AG04449 (cell line): ENCODE measurements at regions of chr17 and their contacts with region 1.

Region 1: DNA sequence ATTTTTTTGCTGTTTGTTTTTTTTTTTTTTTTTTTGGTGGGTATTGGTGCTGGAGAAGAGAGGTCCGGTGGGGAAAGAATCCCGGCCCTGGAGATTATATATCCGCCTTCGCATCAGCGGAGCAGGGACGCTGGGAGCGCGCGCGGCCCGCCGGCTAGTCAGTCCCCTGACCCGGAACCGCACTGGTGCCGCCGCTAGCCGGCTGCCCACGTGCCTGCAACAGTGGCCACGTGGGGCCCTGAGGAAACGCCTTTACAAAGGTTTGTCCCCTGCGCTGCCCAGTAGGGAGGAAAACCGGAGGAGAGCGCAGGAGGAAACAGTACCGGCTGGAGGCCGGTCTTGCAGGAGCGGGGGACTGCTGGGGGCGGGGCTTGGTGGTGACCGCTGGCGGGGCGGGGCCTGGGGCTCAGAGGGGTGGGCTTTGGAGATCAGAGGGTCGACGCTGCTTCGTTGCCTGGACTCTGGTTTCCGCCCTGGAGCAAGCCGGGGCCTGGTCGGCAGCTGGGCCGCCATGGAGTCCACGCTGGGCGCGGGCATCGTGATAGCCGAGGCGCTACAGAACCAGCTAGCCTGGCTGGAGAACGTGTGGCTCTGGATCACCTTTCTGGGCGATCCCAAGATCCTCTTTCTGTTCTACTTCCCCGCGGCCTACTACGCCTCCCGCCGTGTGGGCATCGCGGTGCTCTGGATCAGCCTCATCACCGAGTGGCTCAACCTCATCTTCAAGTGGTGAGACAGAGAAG is at the start of gene G6PC3:
- DNase-seq: peak; percentile 89
- H3K4me3 ChIP-seq: peak within 1 kb of the TSS; percentile 81
- CTCF ChIP-seq: peak; percentile 6

Region 2: GRCh38 chr17:43983515-43984411 is 86.9 kb before region 1 on chr17:
- CTCF ChIA-PET with region 1: no interaction called
- POLR2A ChIA-PET with region 1: no interaction called
- DNase-seq: no peak
- H3K4me3 ChIP-seq: peak overlapping the region; percentile 43
- CTCF ChIP-seq: peak; percentile 16

Region 3: GRCh38 chr17:44086364-44087311 is 16.0 kb after region 1 on chr17:
- CTCF ChIA-PET with region 1: interaction called, 39 read pairs
- POLR2A ChIA-PET with region 1: interaction called, 3 read pairs
- DNase-seq: no peak
- H3K4me3 ChIP-seq: peak overlapping the region; percentile 8
- CTCF ChIP-seq: no peak